HEK293 (cell line): ENCODE measurements at regions of chr17 and their contacts with region 1.

Region 1: GRCh38 chr17:50547035-50547735 is at the start of gene SPATA20:
- H3K4me3 ChIP-seq: peak within 1 kb of the TSS; percentile 53
- H3K27ac ChIP-seq: peak within 1 kb of the TSS; percentile 73
- H3K4me1 ChIP-seq: peaks cover 16% of the 10 kb centered on the region
- CTCF ChIP-seq: peak; percentile 94

Region 2: DNA sequence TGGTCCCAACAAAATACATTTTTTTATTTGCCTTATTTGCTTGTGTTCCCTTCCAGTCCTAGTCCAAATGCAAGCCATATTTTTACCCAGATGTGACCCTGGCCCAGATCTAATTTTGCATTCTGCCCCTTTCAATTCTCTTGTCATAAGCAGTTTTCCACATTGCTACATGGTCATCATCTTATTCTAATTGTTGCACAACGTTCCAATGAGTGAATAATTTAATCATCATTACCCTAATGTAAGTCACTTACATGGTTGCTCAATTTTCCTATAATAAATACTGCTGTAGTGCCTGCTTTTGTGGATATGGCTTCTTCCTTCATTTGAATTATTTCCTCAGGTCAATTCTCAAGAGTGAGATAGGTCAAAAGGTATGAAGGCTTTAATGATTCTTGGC is 55.7 kb before region 1 on chr17:
- CTCF ChIA-PET with region 1: no interaction called
- POLR2A ChIA-PET with region 1: no interaction called
- H3K4me3 ChIP-seq: no peak overlapping the region
- H3K27ac ChIP-seq: no peak overlapping the region
- H3K4me1 ChIP-seq: 0 out of 2 replicates have a peak, but pooled peaks cover 3% of the 10 kb centered on the region
- CTCF ChIP-seq: no peak

Region 3: GRCh38 chr17:50611634-50612033 is 64.4 kb after region 1 on chr17:
- CTCF ChIA-PET with region 1: no interaction called
- POLR2A ChIA-PET with region 1: no interaction called
- H3K4me3 ChIP-seq: no peak overlapping the region
- H3K27ac ChIP-seq: no peak overlapping the region
- H3K4me1 ChIP-seq: no peaks in the 10 kb centered on the region
- CTCF ChIP-seq: no peak

Region 4: DNA sequence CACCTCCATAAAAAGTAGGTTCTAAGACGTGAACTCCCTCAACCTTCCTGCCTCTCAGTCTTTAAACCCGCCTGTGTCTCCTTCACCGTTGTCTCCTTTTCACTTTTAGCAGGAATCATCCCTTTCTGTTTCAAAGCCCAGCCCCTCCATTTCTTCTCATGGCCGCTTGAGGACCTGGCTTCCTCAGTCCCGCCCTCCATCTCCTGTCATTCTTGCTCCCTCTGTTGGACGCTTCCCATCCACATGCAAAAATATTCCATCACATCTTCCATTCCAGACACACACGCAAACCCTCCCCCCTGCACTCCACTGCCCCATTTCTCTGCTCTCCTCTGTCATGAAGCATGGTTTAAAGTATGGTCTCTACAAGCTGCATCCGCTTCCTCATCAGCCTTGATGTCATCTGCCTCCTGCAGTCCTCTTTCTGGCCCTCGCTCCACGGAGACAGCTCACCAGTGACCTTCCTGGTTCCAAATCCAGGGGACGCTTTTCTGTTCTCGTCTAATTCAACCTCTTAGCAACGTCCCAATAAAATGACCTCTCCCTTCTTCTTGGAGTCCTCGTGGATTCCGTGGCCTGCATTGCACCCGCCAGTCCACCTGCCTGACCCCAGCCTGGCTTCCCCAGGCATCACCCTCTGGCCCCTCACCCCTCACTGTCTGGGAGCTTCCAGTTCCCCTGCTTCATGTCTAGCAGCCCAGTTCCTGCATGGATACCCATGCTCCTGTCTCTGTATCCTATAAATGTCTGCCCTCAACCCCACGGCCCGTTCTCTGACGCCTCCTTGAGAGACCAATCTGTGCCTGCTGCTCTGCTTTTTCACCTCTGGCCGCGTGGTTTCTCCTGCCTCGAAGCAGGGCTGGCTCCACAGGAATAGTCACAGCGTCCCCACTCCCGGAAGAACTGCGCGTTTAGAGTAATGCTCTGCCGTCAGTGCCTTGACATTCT is 134.4 kb after region 1 on chr17:
- CTCF ChIA-PET with region 1: interaction called, 32 read pairs
- POLR2A ChIA-PET with region 1: interaction called, 3 read pairs
- H3K4me3 ChIP-seq: no peak overlapping the region
- H3K27ac ChIP-seq: no peak overlapping the region
- H3K4me1 ChIP-seq: peaks cover 3% of the 10 kb centered on the region; the same call in 1 of the 2 replicates
- CTCF ChIP-seq: peak; percentile 98

Region 5: GRCh38 chr17:50691545-50692447 is 144.6 kb after region 1 on chr17:
- CTCF ChIA-PET with region 1: interaction called, 86 read pairs
- POLR2A ChIA-PET with region 1: interaction called, 3 read pairs
- H3K4me3 ChIP-seq: no peak overlapping the region
- H3K27ac ChIP-seq: no peak overlapping the region
- H3K4me1 ChIP-seq: peaks cover 4% of the 10 kb centered on the region; the same call in 1 of the 2 replicates
- CTCF ChIP-seq: no peak

Region 6: GRCh38 chr17:50758989-50759544 is 211.9 kb after region 1 on chr17:
- CTCF ChIA-PET with region 1: interaction called, 11 read pairs
- POLR2A ChIA-PET with region 1: interaction called, 4 read pairs
- H3K4me3 ChIP-seq: no peak overlapping the region
- H3K27ac ChIP-seq: no peak overlapping the region
- H3K4me1 ChIP-seq: peaks cover 5% of the 10 kb centered on the region
- CTCF ChIP-seq: no peak